ENCODE measurements at regions of chr11 and their contacts with region 1.

Region 1: DNA sequence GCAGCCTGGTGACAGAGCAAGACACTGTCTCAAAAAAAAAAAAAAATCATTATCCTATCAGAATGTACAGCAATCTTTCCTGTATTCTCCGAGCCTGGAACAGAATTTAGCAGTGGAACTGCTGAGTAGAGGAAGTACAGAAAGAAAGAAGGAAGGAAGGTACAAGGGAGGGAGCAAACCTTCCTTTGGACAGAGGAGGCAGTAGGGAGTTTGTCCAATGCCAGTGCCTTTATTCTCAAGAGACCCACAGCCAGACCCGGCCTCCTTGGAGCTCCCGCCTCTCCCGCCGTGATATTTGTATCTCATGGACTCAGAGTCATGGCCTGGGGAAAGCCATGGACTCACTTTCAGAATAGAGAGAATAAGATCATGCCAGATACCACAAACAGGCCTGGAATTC is 37.7 kb upstream of the LRRC55 start:
- DNase-seq: no peak
- ATAC-seq: no peak

Region 2: GRCh38 chr11:56841210-56841810 is 302.8 kb before region 1 on chr11:
- intact Hi-C with region 1: no loop called
- DNase-seq: no peak
- ATAC-seq: peak; percentile 46

Region 3: GRCh38 chr11:57085611-57086010 is 58.5 kb before region 1 on chr11:
- intact Hi-C with region 1: loop called (anchors 10 kb)
- DNase-seq: no peak
- ATAC-seq: no peak

Region 4: GRCh38 chr11:57269571-57270021 is 125.5 kb after region 1 on chr11:
- intact Hi-C with region 1: no loop called
- DNase-seq: no peak
- ATAC-seq: no peak